Common myeloid progenitor, CD34-positive (primary cell): ENCODE measurements at regions of chr1 and their contacts with region 1.

Region 1: GRCh38 chr1:111769517-111770146 is 13.9 kb downstream of the DDX20 start:
- DNase-seq: peak; percentile 72 to 87 (median 84)
- H3K4me3 ChIP-seq: no peak overlapping the region
- H3K27ac ChIP-seq: no peak overlapping the region
- H3K4me1 ChIP-seq: no peaks in the 10 kb centered on the region
- H3K27me3 ChIP-seq: no peaks in the 10 kb centered on the region

Region 2: GRCh38 chr1:111481387-111482221 is 288.0 kb before region 1 on chr1:
- CTCF ChIA-PET with region 1: interaction called, 10 read pairs
- POLR2A ChIA-PET with region 1: no interaction called
- DNase-seq: peak; percentile 78 to 79 (median 79)
- H3K4me3 ChIP-seq: no peak overlapping the region
- H3K27ac ChIP-seq: no peak overlapping the region
- H3K4me1 ChIP-seq: peaks cover 17 to 36% (median 26%) of the 10 kb centered on the region in 4 experiments
- H3K27me3 ChIP-seq: no peaks in the 10 kb centered on the region

Region 3: DNA sequence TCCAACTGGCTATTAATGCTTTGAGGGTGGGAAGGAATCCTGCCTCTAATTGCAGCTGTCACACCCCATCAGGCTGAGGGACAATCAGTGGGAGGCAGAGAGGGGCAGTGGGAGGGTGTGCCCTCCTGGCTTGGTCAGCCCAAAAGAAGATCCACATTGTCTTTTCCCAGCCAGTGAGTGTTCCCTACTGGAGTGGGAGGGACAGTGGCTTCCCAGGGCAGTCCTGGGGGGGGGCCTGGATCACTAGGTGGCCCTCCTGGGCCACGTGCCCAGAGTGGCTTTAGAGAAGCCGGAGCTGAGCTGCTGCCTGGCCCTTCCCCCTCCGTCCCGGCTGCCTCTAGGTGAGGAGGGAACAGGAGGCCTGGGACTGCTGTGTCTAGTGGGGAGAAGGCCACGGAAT is 44.4 kb before region 1 on chr1:
- CTCF ChIA-PET with region 1: interaction called, 213 read pairs
- POLR2A ChIA-PET with region 1: no interaction called
- DNase-seq: no peak
- H3K4me3 ChIP-seq: no peak overlapping the region
- H3K27ac ChIP-seq: no peak overlapping the region
- H3K4me1 ChIP-seq: no peaks in the 10 kb centered on the region
- H3K27me3 ChIP-seq: no peaks in the 10 kb centered on the region

Region 4: DNA sequence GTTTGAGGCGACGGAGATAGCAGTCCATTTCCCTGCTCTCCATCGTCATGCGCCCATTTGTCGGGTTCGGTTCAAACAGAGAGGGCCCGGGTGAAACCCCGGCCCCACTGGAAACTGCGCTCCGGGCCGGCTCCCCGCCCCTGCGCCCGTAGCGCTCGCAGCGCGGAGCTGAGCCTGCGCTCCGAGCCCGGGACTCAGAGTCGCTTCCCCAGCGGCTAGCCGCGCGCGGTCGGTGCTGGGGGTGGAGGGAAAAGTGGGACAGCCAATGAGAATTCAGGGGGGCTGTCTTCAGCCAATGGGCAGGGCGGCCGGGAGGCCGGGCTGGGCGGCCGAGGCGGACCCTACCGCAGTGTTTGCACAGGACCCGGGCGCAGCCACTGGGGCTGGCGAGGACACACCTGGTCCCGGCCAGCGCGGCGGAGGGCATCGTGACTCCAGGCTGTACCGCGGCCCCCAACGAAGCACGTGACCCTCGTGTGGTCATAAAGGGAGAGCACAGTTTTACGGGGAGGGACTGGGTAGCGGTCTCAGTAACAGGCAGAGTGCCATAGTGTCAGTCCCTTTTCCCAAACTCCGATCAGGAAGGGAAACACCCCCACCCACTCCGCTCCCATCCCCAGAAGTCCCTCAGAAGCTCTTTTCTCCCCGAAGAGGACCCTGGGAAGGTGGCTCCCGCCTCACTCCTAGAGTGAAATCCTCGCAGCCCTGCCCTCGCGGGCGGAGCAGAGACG is 30.3 kb before region 1 on chr1 and contains the start of gene INKA2:
- CTCF ChIA-PET with region 1: interaction called, 26 read pairs
- POLR2A ChIA-PET with region 1: no interaction called
- DNase-seq: peak; percentile 63 to 86 (median 80)
- H3K4me3 ChIP-seq: peak within 1 kb of the TSS; percentile 42 to 80 (median 64)
- H3K27ac ChIP-seq: peak within 1 kb of the TSS in 1 of 2 experiments; percentile 30
- H3K4me1 ChIP-seq: peaks cover 4 to 65% (median 40%) of the 10 kb centered on the region in 4 experiments
- H3K27me3 ChIP-seq: peaks cover 0 to 27% (median 13%) of the 10 kb centered on the region in 5 experiments

Region 5: DNA sequence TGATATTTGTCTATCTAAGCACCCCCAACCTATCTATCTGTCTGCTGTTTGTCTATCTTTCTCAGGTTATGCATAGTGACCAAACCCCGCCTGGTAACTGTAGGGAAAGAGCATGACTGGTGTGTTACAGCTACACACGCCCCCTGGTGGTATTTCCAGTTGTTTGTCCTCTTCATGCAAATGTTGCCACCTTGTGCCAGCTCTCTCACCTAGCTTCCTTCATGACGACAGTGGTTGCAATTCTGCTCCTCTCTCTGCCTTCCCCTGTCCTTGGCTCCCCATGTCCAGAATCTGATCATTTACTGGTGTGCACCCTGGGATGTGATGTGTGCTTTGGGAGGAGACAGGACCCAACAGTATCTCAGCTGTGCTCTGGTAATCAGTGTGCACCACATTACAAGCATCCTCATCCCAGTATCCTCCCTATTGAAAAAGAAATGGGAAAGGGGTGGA is 22.3 kb before region 1 on chr1:
- CTCF ChIA-PET with region 1: interaction called, 14 read pairs
- POLR2A ChIA-PET with region 1: no interaction called
- DNase-seq: peak; percentile 74 to 85 (median 81)
- H3K4me3 ChIP-seq: no peak overlapping the region
- H3K27ac ChIP-seq: no peak overlapping the region
- H3K4me1 ChIP-seq: peaks cover 0 to 19% (median 8%) of the 10 kb centered on the region in 4 experiments
- H3K27me3 ChIP-seq: peaks cover 0 to 6% (median 1%) of the 10 kb centered on the region in 5 experiments

Region 6: DNA sequence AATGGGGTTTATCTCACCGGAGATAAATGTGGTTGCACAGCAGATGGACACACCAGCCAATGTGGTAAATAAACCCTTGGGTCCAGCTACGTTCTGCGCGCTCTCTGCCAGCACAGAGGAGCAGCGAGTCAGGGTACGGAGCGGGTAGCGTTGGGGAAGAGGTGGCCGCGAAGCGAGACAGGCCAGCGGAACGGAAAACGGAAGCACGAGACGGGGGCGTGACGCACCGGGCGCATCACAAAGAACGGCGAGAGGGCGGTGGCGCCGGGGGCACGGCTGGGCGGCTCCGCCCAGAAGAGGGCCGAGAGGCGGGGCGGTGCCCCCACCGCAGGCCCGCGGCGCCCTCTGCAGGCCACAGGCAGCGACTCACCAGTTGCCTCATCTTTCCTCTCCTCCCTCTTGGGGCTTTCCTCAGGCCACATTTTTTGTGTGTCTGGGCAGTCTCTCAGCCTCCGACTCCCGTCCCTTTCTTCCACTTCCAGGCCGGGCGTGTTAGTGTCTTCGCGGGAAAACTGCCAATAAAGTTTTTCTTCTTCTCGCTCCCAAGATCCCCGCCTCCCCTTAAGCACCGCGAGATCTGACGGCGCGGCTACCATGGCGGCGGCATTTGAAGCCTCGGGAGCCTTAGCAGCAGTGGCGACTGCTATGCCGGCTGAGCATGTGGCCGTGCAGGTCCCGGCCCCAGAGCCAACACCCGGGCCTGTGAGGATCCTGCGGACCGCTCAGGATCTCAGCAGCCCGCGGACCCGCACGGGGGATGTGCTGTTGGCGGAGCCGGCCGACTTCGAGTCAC is 14.1 kb before region 1 on chr1 and contains the start of gene DDX20:
- CTCF ChIA-PET with region 1: interaction called, 29 read pairs
- POLR2A ChIA-PET with region 1: interaction called, 3 read pairs
- DNase-seq: peak; percentile 96 to 98 (median 98)
- H3K4me3 ChIP-seq: peak within 1 kb of the TSS; percentile 57 to 92 (median 85)
- H3K27ac ChIP-seq: peak within 1 kb of the TSS; percentile 92 to 96
- H3K4me1 ChIP-seq: peaks cover 6 to 31% (median 19%) of the 10 kb centered on the region in 4 experiments
- H3K27me3 ChIP-seq: no peaks in the 10 kb centered on the region